CD8-positive, alpha-beta memory T cell (primary cell): ENCODE measurements at regions of chr3 and their contacts with region 1.

Region 1: GRCh38 chr3:176872771-176873209 is 324.5 kb downstream of the TBL1XR1 start:
- DNase-seq: peak; percentile 21 to 48 (median 31)
- H3K4me3 ChIP-seq: no peak overlapping the region
- H3K4me3 Mint-ChIP-seq: no peak overlapping the region
- H3K27ac ChIP-seq: no peak overlapping the region
- H3K27ac Mint-ChIP-seq: peak overlapping the region in 2 of 8 donors; percentile 7 to 39
- H3K4me1 ChIP-seq: peaks cover 4% of the 10 kb centered on the region
- H3K4me1 Mint-ChIP-seq: peaks cover 7 to 11% (median 9%) of the 10 kb centered on the region in 3 donors
- H3K27me3 ChIP-seq: no peaks in the 10 kb centered on the region
- H3K27me3 Mint-ChIP-seq: peaks cover 0 to 7% of the 10 kb centered on the region in 2 donors

Region 2: GRCh38 chr3:176896640-176897039 is 23.9 kb after region 1 on chr3:
- CTCF ChIA-PET with region 1: no interaction called
- POLR2A ChIA-PET with region 1: no interaction called
- DNase-seq: no peak
- H3K4me3 ChIP-seq: no peak overlapping the region
- H3K4me3 Mint-ChIP-seq: no peak overlapping the region
- H3K27ac ChIP-seq: no peak overlapping the region
- H3K27ac Mint-ChIP-seq: no peak overlapping the region
- H3K4me1 ChIP-seq: no peaks in the 10 kb centered on the region
- H3K4me1 Mint-ChIP-seq: no peaks in the 10 kb centered on the region
- H3K27me3 ChIP-seq: no peaks in the 10 kb centered on the region
- H3K27me3 Mint-ChIP-seq: peaks cover 15 to 46% of the 10 kb centered on the region in 2 donors

Region 3: GRCh38 chr3:176939022-176939817 is 66.4 kb after region 1 on chr3:
- CTCF ChIA-PET with region 1: interaction called, 10 read pairs
- POLR2A ChIA-PET with region 1: no interaction called
- DNase-seq: peak in 3 of 5 donors; percentile 21 to 47 (median 31)
- H3K4me3 ChIP-seq: no peak overlapping the region
- H3K4me3 Mint-ChIP-seq: no peak overlapping the region
- H3K27ac ChIP-seq: no peak overlapping the region
- H3K27ac Mint-ChIP-seq: no peak overlapping the region
- H3K4me1 ChIP-seq: no peaks in the 10 kb centered on the region
- H3K4me1 Mint-ChIP-seq: no peaks in the 10 kb centered on the region
- H3K27me3 ChIP-seq: no peaks in the 10 kb centered on the region
- H3K27me3 Mint-ChIP-seq: peaks cover 10 to 28% of the 10 kb centered on the region in 2 donors

Region 4: GRCh38 chr3:178385280-178385952 is 1512.6 kb after region 1 on chr3:
- CTCF ChIA-PET with region 1: interaction called, 14 read pairs
- POLR2A ChIA-PET with region 1: no interaction called
- DNase-seq: peak in 2 of 5 donors; percentile 17 to 21
- H3K4me3 ChIP-seq: no peak overlapping the region
- H3K4me3 Mint-ChIP-seq: no peak overlapping the region
- H3K27ac ChIP-seq: no peak overlapping the region
- H3K27ac Mint-ChIP-seq: no peak overlapping the region
- H3K4me1 ChIP-seq: no peaks in the 10 kb centered on the region
- H3K4me1 Mint-ChIP-seq: no peaks in the 10 kb centered on the region
- H3K27me3 ChIP-seq: no peaks in the 10 kb centered on the region
- H3K27me3 Mint-ChIP-seq: peaks cover 5 to 41% of the 10 kb centered on the region in 2 donors